ENCODE measurements at regions of chr6 and their contacts with region 1.

Region 1: GRCh38 chr6:103231185-103231584 is 1628.5 kb downstream of the HACE1 start:
- DNase-seq: no peak
- ATAC-seq: no peak
- H3K4me3 ChIP-seq: no peak overlapping the region
- H3K27ac ChIP-seq: no peak overlapping the region
- H3K4me1 ChIP-seq: no peaks in the 10 kb centered on the region
- H3K27me3 ChIP-seq: no peaks in the 10 kb centered on the region
- CTCF ChIP-seq: no peak

Region 2: DNA sequence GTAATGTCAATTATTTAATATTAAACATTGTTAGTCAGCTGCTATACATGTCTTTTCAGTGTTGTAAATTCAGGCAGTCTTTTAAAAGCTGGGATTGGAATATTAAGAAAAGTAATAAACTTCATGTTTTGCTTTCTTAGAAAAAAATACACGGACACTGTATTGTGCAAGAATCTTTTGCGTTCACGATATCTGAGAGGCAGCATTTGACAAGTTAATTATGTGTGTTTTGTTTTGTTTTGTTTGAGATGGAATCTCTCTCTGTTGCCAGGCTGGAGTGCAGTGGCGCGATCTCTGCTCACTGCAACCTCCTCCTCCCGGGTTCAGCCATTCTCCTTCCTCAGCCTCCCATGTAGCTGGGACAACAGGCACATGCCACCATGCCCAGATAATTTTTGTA is 32.8 kb before region 1 on chr6:
- CTCF ChIA-PET with region 1: no interaction called
- POLR2A ChIA-PET with region 1: no interaction called
- intact Hi-C with region 1: loop called (anchors 5 kb)
- DNase-seq: no peak
- ATAC-seq: no peak; the same call in 1 of the 2 replicates
- H3K4me3 ChIP-seq: no peak overlapping the region
- H3K27ac ChIP-seq: peak overlapping the region; percentile 30
- H3K4me1 ChIP-seq: peaks cover 7% of the 10 kb centered on the region; the same call in 1 of the 2 replicates
- H3K27me3 ChIP-seq: no peaks in the 10 kb centered on the region
- CTCF ChIP-seq: no peak

Region 3: GRCh38 chr6:103277936-103278335 is 46.8 kb after region 1 on chr6:
- CTCF ChIA-PET with region 1: no interaction called
- POLR2A ChIA-PET with region 1: no interaction called
- intact Hi-C with region 1: no loop called
- DNase-seq: no peak
- ATAC-seq: no peak
- H3K4me3 ChIP-seq: no peak overlapping the region
- H3K27ac ChIP-seq: no peak overlapping the region
- H3K4me1 ChIP-seq: no peaks in the 10 kb centered on the region
- H3K27me3 ChIP-seq: no peaks in the 10 kb centered on the region
- CTCF ChIP-seq: no peak

Measured in PC-3 (cell line).